ENCODE measurements at regions of chr14 and their contacts with region 1.

Region 1: DNA sequence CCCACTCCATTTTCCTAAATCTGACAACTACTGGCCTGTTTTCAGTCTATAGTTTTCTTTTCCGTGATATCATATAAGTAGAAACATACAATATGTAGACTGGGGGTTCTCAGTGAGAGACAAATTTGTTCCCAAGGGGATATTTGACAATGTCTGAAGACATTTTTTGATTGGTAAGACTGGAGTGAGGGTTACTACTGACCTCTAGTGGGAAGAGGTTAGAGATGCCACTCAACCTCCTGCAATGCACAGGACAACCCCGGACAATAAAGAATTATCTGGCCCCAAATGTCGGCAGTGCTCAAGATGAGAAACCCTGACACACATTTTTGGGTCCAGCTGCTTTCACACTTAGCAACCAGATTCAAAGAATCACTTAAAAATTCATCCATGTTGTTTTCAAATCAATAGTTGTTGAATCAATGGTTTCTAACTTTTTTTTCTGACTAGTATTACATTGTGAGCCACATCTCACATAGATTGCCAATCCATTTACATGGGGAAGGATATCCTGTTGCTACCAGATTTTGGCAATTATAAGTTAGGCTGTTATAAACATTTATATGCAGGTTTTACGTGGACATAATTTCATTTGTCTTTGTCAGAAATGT is 307.1 kb downstream of the RPL10L start:
- DNase-seq: peak; percentile 44
- H3K4me3 ChIP-seq: no peak overlapping the region
- H3K27ac ChIP-seq: no peak overlapping the region
- H3K4me1 ChIP-seq: no peaks in the 10 kb centered on the region
- H3K27me3 ChIP-seq: no peaks in the 10 kb centered on the region
- CTCF ChIP-seq: peak; percentile 56

Region 2: DNA sequence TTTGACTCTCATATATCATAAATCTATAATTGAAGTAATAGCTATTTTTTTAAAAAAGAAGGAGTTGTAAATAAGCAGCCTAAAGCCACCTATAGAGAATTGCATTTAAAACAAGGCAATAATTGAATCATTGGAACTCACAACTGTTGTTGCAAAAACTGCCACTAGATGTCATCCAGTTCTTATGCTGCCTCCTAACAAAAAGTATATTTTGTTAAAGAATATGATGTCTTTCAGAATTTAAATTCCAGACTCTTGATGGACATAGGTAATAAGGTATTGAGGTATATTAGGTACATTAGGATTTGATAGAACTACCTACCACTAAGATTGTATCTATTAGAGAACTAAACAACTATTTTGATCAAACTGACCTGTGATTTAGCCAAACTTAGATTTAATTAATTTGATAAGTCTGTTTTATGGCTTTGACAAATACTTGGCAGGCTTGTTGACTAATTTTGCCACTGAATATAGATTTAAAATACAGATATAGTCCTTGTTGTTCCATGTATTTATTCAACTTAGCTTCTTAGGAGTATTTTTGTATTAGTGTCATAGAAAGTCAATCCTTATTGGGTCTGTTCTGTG is 94.2 kb before region 1 on chr14:
- CTCF ChIA-PET with region 1: no interaction called
- POLR2A ChIA-PET with region 1: no interaction called
- intact Hi-C with region 1: loop called (anchors 5 kb)
- DNase-seq: peak; percentile 21
- H3K4me3 ChIP-seq: no peak overlapping the region
- H3K27ac ChIP-seq: no peak overlapping the region
- H3K4me1 ChIP-seq: no peaks in the 10 kb centered on the region
- H3K27me3 ChIP-seq: no peaks in the 10 kb centered on the region
- CTCF ChIP-seq: peak; percentile 64

Region 3: DNA sequence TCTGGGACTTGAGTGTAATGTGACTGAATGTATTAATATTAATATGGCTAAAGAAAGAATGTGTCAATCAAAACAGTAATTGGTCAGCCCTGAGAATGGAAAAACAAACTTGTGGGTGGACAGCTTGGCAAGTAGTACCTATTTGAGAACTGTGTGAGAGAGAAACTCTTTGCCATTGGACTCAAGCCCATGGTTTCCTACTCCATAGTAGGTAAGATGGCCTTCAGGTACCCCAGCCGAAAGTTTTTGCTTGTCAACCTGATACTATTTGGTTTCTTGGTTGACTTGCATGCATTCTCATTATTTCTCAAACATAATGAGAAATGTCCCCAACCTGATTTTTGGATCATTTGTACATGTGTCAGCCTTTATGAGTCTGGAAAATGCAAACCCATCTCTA is 939.9 kb after region 1 on chr14:
- CTCF ChIA-PET with region 1: no interaction called
- POLR2A ChIA-PET with region 1: no interaction called
- intact Hi-C with region 1: no loop called
- DNase-seq: no peak
- H3K4me3 ChIP-seq: no peak overlapping the region
- H3K27ac ChIP-seq: no peak overlapping the region
- H3K4me1 ChIP-seq: no peaks in the 10 kb centered on the region
- H3K27me3 ChIP-seq: peaks cover 3% of the 10 kb centered on the region
- CTCF ChIP-seq: no peak

Measured in A673 (cell line).